Colonic mucosa (tissue), 4 donors: ENCODE measurements at regions of chr15 and their contacts with region 1.

Region 1: GRCh38 chr15:98964466-98965454 is 42.8 kb downstream of the PGPEP1L start:
- DNase-seq: no peak
- H3K4me3 ChIP-seq: no peak overlapping the region
- H3K27ac ChIP-seq: no peak overlapping the region
- H3K4me1 ChIP-seq: no peaks in the 10 kb centered on the region
- H3K27me3 ChIP-seq: no peaks in the 10 kb centered on the region
- CTCF ChIP-seq: no peak

Region 2: GRCh38 chr15:98914626-98915025 is 50.1 kb before region 1 on chr15:
- intact Hi-C with region 1: loop called (anchors 5 kb)
- DNase-seq: no peak
- H3K4me3 ChIP-seq: no peak overlapping the region
- H3K27ac ChIP-seq: no peak overlapping the region
- H3K4me1 ChIP-seq: peaks cover 6% of the 10 kb centered on the region
- H3K27me3 ChIP-seq: no peaks in the 10 kb centered on the region
- CTCF ChIP-seq: no peak

Region 3: GRCh38 chr15:99090011-99090699 is 125.4 kb after region 1 on chr15:
- intact Hi-C with region 1: no loop called
- DNase-seq: no peak
- H3K4me3 ChIP-seq: no peak overlapping the region
- H3K27ac ChIP-seq: no peak overlapping the region
- H3K4me1 ChIP-seq: no peaks in the 10 kb centered on the region
- H3K27me3 ChIP-seq: no peaks in the 10 kb centered on the region
- CTCF ChIP-seq: no peak

Region 4: GRCh38 chr15:99100245-99101173 is 135.7 kb after region 1 on chr15:
- intact Hi-C with region 1: no loop called
- DNase-seq: peak; percentile 81
- H3K4me3 ChIP-seq: peak overlapping the region; percentile 15
- H3K27ac ChIP-seq: no peak overlapping the region
- H3K4me1 ChIP-seq: no peaks in the 10 kb centered on the region
- H3K27me3 ChIP-seq: peaks cover 13% of the 10 kb centered on the region
- CTCF ChIP-seq: peak; percentile 57